ENCODE measurements at regions of chr18 and their contacts with region 1.

Region 1: DNA sequence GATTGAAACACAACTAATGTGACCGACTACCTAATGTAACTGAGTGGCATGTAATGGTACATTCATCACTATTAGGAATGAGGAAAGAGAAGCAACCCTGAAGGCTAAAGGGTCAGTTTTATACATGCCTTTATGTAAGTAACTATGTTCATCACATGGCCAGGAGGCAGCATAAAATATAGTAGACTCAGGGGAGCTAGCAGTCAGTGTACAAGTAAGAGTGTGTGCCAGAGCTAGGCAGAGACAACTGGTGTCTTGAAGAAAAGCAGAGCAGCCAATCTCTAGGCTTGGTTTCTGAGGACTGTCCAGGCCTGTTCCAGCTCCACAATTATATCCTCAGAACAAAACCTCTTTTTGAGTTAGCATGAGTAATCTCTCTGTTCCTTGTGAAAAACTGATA is 18.1 kb downstream of the SMAD2 start:
- DNase-seq: no peak
- ATAC-seq: peak; percentile 74
- H3K4me3 ChIP-seq: no peak overlapping the region
- H3K27ac ChIP-seq: peak overlapping the region; percentile 20
- H3K4me1 ChIP-seq: peaks cover 10% of the 10 kb centered on the region
- H3K27me3 ChIP-seq: no peaks in the 10 kb centered on the region
- CTCF ChIP-seq: no peak
- EP300 ChIP-seq: no peak
- POLR2A ChIP-seq: no peak
- RAD21 ChIP-seq: no peak

Region 2: GRCh38 chr18:47930931-47931717 is 18.8 kb after region 1 on chr18:
- CTCF ChIA-PET with region 1: interaction called, 4 read pairs
- POLR2A ChIA-PET with region 1: interaction called, 4 read pairs
- RAD21 ChIA-PET with region 1: interaction called, 4 read pairs
- SMC1A ChIA-PET with region 1: interaction called, 15 read pairs
- in situ Hi-C with region 1: no loop called
- intact Hi-C with region 1: no loop called
- DNase-seq: peak; percentile 73
- ATAC-seq: peak; percentile 90
- H3K4me3 ChIP-seq: peak overlapping the region; percentile 63; the same call in 1 of the 2 replicates
- H3K27ac ChIP-seq: peak overlapping the region; percentile 86
- H3K4me1 ChIP-seq: no peaks in the 10 kb centered on the region
- H3K27me3 ChIP-seq: no peaks in the 10 kb centered on the region
- CTCF ChIP-seq: no peak
- EP300 ChIP-seq: no peak
- POLR2A ChIP-seq: peak; percentile 83
- RAD21 ChIP-seq: no peak

Measured in GM12878 (cell line).